ENCODE measurements at regions of chr21 and their contacts with region 1.

Region 1: DNA sequence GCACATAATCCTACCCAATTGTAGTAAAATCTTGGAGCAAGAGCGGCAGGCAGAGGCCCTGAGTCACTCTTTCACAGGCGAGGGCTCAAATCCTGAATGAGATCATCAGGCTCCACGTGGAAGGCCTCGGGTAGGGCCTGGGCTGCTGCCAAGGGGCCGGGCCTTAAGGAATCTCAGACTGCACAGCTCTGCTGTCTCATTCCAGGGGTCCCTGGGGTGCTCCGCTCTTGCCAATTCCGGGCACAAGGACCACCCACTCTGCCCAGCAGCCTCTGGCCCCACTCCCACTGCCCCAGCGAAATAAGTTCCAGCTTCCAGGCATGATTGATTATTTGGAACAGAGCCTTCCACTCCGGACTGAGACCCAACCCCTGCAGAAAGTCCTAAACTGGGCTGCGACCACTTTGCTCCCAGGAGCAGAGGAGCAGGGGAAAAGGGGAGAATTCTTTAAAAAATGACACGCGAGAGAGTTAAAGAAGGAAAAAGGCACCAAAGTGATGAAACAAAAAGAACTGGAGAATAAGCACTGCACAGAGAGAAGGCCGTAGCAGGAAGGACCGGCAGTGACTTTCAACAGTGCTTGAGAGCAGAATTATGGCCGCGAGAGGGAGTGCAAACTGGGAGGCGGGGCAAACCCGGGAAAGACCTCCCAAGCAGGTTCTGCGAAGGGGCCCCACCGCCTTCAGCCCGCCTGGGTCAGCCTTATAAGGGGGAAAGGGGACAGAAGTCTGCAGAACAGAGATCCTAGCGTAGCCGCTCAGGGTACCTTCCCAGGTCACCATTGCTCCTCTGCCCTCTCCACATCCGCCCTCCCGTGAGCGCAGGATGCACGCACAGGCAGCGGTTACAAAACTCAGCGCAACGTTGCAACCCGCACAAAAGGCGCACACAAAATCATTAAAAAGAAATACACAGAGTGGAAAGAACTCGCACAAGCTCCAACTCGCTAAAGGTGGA is 2.0 kb downstream of the ADAMTS1 start:
- DNase-seq: peak; percentile 85
- H3K4me3 ChIP-seq: peak overlapping the region; percentile 50 to 53
- H3K27ac ChIP-seq: peak overlapping the region; percentile 83
- H3K4me1 ChIP-seq: no peaks in the 10 kb centered on the region
- H3K27me3 ChIP-seq: no peaks in the 10 kb centered on the region
- CTCF ChIP-seq: peak in 3 of 4 experiments; percentile 14 to 36 (median 31)
- POLR2A ChIP-seq: peak; percentile 18

Region 2: GRCh38 chr21:25759573-25759972 is 1083.7 kb before region 1 on chr21:
- intact Hi-C with region 1: no loop called
- DNase-seq: no peak
- H3K4me3 ChIP-seq: no peak overlapping the region
- H3K27ac ChIP-seq: no peak overlapping the region
- H3K4me1 ChIP-seq: no peaks in the 10 kb centered on the region
- H3K27me3 ChIP-seq: no peaks in the 10 kb centered on the region
- CTCF ChIP-seq: no peak
- POLR2A ChIP-seq: no peak

Region 3: GRCh38 chr21:26801524-26801923 is 41.7 kb before region 1 on chr21:
- intact Hi-C with region 1: loop called (anchors 5 kb)
- DNase-seq: no peak
- H3K4me3 ChIP-seq: no peak overlapping the region
- H3K27ac ChIP-seq: peak overlapping the region; percentile 62 to 71
- H3K4me1 ChIP-seq: no peaks in the 10 kb centered on the region
- H3K27me3 ChIP-seq: no peaks in the 10 kb centered on the region
- CTCF ChIP-seq: no peak
- POLR2A ChIP-seq: no peak

Region 4: DNA sequence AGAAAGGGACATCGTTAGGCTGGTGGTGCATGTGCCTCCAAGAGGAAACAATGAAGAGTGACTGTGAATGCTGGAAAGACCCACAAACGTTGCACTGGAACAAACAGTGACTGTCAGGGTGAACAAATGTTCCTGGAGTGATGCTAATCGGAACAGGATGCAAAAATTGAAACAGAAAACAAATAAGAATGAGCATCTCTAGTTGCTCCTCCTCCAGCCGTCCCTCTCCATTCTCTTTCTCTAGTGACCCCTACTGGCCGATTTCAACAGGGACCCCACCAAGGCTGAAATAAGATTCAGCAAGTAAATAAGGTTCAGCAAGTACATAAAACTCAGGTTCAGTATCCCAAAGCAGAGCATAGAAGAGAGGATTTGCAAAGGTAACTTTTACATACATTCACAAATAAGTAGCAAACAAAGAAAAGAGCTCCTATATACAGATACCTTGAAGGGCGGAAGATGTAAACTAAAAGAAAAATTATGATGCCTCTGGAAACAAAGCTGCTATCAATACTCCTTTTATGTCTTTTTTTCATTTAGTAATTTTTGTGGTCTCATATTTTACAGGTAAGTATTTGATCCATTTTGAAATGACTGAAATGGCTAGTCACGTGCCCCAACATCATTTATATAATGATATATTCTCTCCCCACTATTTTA is 959.7 kb after region 1 on chr21:
- intact Hi-C with region 1: loop called (anchors 10 kb)
- DNase-seq: peak; percentile 12
- H3K4me3 ChIP-seq: no peak overlapping the region
- H3K27ac ChIP-seq: no peak overlapping the region
- H3K4me1 ChIP-seq: no peaks in the 10 kb centered on the region
- H3K27me3 ChIP-seq: no peaks in the 10 kb centered on the region
- CTCF ChIP-seq: peak in 3 of 4 experiments; percentile 31 to 49 (median 47)
- POLR2A ChIP-seq: no peak

Region 5: GRCh38 chr21:28336314-28336713 is 1493.1 kb after region 1 on chr21:
- intact Hi-C with region 1: loop called (anchors 5 kb)
- DNase-seq: peak; percentile 10
- H3K4me3 ChIP-seq: no peak overlapping the region
- H3K27ac ChIP-seq: no peak overlapping the region
- H3K4me1 ChIP-seq: no peaks in the 10 kb centered on the region
- H3K27me3 ChIP-seq: no peaks in the 10 kb centered on the region
- CTCF ChIP-seq: peak in 2 of 4 experiments; percentile 55 to 58
- POLR2A ChIP-seq: no peak